Activated CD8-positive, alpha-beta T cell treated with anti-CD3 and anti-CD28 coated beads, Interleukin-2, amount 10 ng/mL, durations not matched to agents 7 days and 5 days (primary cell): ENCODE measurements at regions of chr12 and their contacts with region 1.

Region 1: GRCh38 chr12:132908145-132909044 is 21.0 kb upstream of the CHFR start:
- DNase-seq: peak; percentile 98
- ATAC-seq: peak; percentile 97
- H3K4me3 Mint-ChIP-seq: peak overlapping the region; percentile 86
- H3K27ac Mint-ChIP-seq: peak overlapping the region; percentile 95
- H3K4me1 Mint-ChIP-seq: peaks cover 23% of the 10 kb centered on the region
- H3K27me3 Mint-ChIP-seq: peaks cover 14% of the 10 kb centered on the region

Region 2: GRCh38 chr12:132828706-132829534 is 79.5 kb before region 1 on chr12 and contains the start of gene GOLGA3:
- CTCF ChIA-PET with region 1: interaction called, 24 read pairs
- POLR2A ChIA-PET with region 1: interaction called, 6 read pairs
- DNase-seq: peak; percentile 95
- ATAC-seq: peak; percentile 91
- H3K4me3 Mint-ChIP-seq: peak within 1 kb of the TSS; percentile 93
- H3K27ac Mint-ChIP-seq: peak within 1 kb of the TSS; percentile 100
- H3K4me1 Mint-ChIP-seq: peaks cover 59% of the 10 kb centered on the region
- H3K27me3 Mint-ChIP-seq: no peaks in the 10 kb centered on the region
- total RNA-seq, gene GOLGA3: 63.7 to 69.3 TPM

Region 3: GRCh38 chr12:132847363-132848356 is 60.7 kb before region 1 on chr12:
- CTCF ChIA-PET with region 1: interaction called, 10 read pairs
- POLR2A ChIA-PET with region 1: no interaction called
- DNase-seq: no peak
- ATAC-seq: no peak
- H3K4me3 Mint-ChIP-seq: no peak overlapping the region
- H3K27ac Mint-ChIP-seq: no peak overlapping the region
- H3K4me1 Mint-ChIP-seq: no peaks in the 10 kb centered on the region
- H3K27me3 Mint-ChIP-seq: no peaks in the 10 kb centered on the region

Region 4: GRCh38 chr12:132887513-132888351 is 20.7 kb before region 1 on chr12 and contains the start of gene CHFR:
- CTCF ChIA-PET with region 1: interaction called, 11 read pairs
- POLR2A ChIA-PET with region 1: interaction called, 7 read pairs
- DNase-seq: peak; percentile 97
- ATAC-seq: peak; percentile 99
- H3K4me3 Mint-ChIP-seq: peak within 1 kb of the TSS; percentile 97
- H3K27ac Mint-ChIP-seq: peak within 1 kb of the TSS; percentile 100
- H3K4me1 Mint-ChIP-seq: peaks cover 30% of the 10 kb centered on the region
- H3K27me3 Mint-ChIP-seq: peaks cover 4% of the 10 kb centered on the region
- total RNA-seq, gene CHFR: 88.0 to 90.6 TPM